ENCODE measurements at regions of chr5 and their contacts with region 1.

Region 1: DNA sequence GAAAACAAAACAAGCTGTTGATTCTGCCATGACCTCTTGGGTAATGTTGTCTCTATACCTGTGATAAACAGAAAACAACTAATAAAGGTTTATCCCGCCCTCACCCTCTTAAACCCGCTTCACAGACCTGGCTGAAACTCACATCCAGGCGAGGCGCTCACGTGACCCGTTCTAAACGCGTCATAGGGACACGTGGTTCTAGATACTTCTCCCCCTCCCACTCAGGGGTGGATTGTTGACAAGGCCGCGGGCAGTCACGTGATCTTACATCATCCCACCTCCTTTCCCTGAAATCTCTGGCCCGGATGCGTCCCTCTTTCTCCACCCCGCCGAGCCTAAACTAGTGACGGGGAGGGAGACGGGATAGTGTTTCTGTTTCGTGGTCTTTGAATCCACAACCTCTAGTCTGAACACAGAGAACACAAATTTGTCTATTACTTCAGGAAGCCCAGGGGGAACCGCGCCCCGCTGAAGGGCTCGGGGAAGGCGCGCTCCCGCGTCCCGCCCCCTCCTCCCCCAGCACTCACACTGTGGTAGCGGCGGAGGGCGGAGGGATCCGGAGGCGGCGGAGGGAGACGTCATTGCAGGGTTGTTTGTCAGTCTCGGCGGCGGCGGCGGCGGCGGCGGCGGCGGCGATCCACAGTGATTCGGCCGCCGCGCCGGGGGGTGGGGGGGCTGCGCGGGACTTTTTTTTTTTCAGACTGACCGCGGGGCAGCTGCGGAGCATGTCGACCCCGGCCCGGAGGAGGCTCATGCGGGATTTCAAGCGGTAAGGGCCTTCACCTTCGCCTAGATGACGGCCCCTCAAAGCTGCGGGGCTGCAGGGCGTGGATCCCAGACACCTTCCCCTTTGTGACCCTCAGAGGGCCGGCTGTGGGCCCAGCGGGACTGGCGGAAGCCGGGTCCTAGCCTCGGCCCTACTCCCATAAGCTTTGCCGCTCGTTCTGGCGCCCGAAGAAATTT is at the start of gene UBE2B:
- DNase-seq: peak; percentile 93
- H3K4me3 ChIP-seq: peak within 1 kb of the TSS; percentile 99
- H3K27ac ChIP-seq: peak within 1 kb of the TSS; percentile 97
- H3K4me1 ChIP-seq: peaks cover 22% of the 10 kb centered on the region
- H3K27me3 ChIP-seq: no peaks in the 10 kb centered on the region
- CTCF ChIP-seq: no peak
- total RNA-seq, gene UBE2B: 61.9 and 85.5 TPM in 2 replicates

Region 2: GRCh38 chr5:134176511-134177368 is 194.4 kb before region 1 on chr5 and contains the start of gene SKP1:
- CTCF ChIA-PET with region 1: no interaction called
- POLR2A ChIA-PET with region 1: no interaction called
- intact Hi-C with region 1: loop called (anchors 1 kb)
- DNase-seq: peak; percentile 59 to 84
- H3K4me3 ChIP-seq: peak within 1 kb of the TSS; percentile 93
- H3K27ac ChIP-seq: peak within 1 kb of the TSS; percentile 93
- H3K4me1 ChIP-seq: peaks cover 23% of the 10 kb centered on the region
- H3K27me3 ChIP-seq: no peaks in the 10 kb centered on the region
- CTCF ChIP-seq: no peak
- total RNA-seq, gene SKP1: 335 and 409 TPM in 2 replicates

Region 3: DNA sequence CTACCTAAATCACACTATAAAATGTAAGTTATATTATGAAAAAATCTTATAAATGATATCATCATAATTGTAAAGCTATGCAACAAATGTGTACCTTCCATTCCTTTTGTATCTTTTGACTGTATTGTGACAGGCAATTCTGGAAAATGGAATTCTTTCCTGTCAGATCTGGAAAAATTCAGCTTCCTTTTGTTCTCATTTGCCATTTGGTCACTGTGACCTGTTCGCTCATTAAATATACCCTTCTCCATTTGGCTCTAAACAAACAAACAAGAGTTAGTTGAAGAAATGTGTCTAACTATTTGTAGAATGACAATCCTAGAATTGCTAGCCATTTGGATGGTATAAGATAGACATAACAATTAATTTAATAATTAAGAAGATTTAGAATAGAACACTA is 66.8 kb before region 1 on chr5:
- CTCF ChIA-PET with region 1: interaction called, 7 read pairs
- POLR2A ChIA-PET with region 1: no interaction called
- intact Hi-C with region 1: loop called (anchors 1 kb)
- DNase-seq: no peak
- H3K4me3 ChIP-seq: no peak overlapping the region
- H3K27ac ChIP-seq: no peak overlapping the region
- H3K4me1 ChIP-seq: no peaks in the 10 kb centered on the region
- H3K27me3 ChIP-seq: no peaks in the 10 kb centered on the region
- CTCF ChIP-seq: no peak

Region 4: GRCh38 chr5:134458234-134459012 is 87.3 kb after region 1 on chr5:
- CTCF ChIA-PET with region 1: no interaction called
- POLR2A ChIA-PET with region 1: no interaction called
- intact Hi-C with region 1: no loop called
- DNase-seq: no peak
- H3K4me3 ChIP-seq: no peak overlapping the region
- H3K27ac ChIP-seq: no peak overlapping the region
- H3K4me1 ChIP-seq: no peaks in the 10 kb centered on the region
- H3K27me3 ChIP-seq: no peaks in the 10 kb centered on the region
- CTCF ChIP-seq: no peak

Region 5: DNA sequence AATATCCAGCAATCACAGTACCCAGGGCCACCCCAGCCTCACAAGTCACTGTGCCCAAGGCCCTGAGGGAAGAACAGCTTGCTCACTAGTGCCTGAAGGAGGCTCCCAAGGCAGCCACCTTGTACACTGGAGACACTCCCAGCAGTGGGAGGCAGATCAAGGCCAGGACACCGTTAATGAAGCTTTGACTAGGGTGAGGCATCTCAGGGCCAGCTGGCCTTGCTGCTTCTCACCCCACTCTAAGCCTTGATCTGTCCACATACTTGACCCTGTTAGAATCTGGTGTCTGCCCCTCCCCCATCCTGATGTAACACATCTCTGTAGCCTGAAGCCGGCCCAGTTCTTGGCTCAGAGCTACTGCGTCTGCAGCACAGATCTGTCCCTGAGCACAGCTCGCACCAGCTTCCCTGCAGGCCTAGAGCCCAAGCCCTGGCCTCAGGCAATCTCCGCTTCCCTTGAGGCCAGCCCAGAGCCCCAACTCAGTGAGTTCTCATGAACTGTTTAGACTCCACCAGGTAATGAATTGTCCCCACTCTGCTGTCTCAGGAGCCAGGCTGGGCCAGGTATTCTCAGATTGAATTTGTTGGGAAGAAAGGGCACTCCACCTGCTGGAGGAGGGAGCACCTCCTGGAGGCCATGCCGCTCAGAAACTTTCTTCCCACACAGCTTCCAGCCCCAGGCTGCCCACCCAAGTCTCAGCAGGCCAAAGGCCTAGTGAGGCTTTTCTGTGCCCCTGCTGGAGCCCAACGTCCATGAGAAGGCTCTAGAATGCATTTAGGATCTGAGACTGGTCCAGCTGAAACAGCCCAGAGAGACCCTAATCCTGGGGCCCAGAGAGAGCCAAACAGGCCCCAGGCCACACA is 140.9 kb after region 1 on chr5:
- CTCF ChIA-PET with region 1: no interaction called
- POLR2A ChIA-PET with region 1: interaction called, 11 read pairs
- intact Hi-C with region 1: loop called (anchors 5 kb)
- DNase-seq: peak; percentile 73
- H3K4me3 ChIP-seq: peak overlapping the region; percentile 43; the same call in 1 of the 2 replicates
- H3K27ac ChIP-seq: peak overlapping the region; percentile 92
- H3K4me1 ChIP-seq: peaks cover 64% of the 10 kb centered on the region
- H3K27me3 ChIP-seq: no peaks in the 10 kb centered on the region
- CTCF ChIP-seq: peak; percentile 67

Region 6: DNA sequence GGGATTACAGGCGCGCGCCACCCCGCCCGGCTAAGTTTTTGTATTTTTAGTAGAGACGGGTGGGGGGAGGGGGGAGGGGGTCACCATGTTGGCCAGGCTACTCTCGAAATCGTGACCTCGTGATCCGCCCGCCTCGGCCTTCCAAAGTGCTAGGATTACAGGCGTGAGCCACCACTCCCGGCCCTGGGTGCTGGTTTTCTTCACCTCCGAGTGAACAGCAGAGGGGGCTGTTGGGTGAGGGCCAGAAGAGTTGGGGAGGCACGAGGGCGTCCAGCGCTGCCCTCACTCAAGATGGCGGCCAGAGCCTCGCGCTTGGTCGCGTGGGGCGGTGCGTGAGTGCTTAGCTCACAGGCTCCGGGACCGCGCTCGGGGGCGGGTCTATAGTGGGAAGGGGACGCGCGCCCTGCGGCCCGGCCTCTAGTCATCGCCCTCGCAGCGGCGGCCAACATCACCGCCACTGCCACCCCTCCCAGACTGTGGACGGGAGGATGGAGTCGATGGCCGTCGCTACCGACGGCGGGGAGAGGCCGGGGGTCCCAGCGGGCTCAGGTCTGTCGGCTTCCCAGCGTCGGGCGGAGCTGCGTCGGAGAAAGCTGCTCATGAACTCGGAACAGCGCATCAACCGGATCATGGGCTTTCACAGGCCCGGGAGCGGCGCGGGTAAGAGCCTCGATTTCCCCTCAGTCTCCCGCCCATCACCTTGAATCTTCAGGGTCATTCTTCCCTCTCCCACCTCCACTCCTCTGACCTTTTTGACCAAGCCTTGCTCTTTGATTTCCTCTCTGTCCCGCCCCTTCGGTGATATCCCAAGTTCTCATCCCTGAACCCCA is 367.2 kb after region 1 on chr5 and contains the start of gene CAMLG:
- CTCF ChIA-PET with region 1: no interaction called
- POLR2A ChIA-PET with region 1: interaction called, 4 read pairs
- intact Hi-C with region 1: loop called (anchors 5 kb)
- DNase-seq: peak; percentile 91 to 97
- H3K4me3 ChIP-seq: peak within 1 kb of the TSS; percentile 72
- H3K27ac ChIP-seq: peak within 1 kb of the TSS; percentile 83
- H3K4me1 ChIP-seq: peaks cover 14% of the 10 kb centered on the region
- H3K27me3 ChIP-seq: no peaks in the 10 kb centered on the region
- CTCF ChIP-seq: peak; percentile 70
- total RNA-seq, gene CAMLG: 24.4 and 28.0 TPM in 2 replicates

Region 7: GRCh38 chr5:135013947-135014570 is 642.9 kb after region 1 on chr5:
- CTCF ChIA-PET with region 1: no interaction called
- POLR2A ChIA-PET with region 1: no interaction called
- intact Hi-C with region 1: no loop called
- DNase-seq: no peak
- H3K4me3 ChIP-seq: no peak overlapping the region
- H3K27ac ChIP-seq: no peak overlapping the region
- H3K4me1 ChIP-seq: no peaks in the 10 kb centered on the region
- H3K27me3 ChIP-seq: no peaks in the 10 kb centered on the region
- CTCF ChIP-seq: no peak

Measured in PC-9 (cell line).